Naive thymus-derived CD4-positive, alpha-beta T cell (primary cell): ENCODE measurements at regions of chr5 and their contacts with region 1.

Region 1: GRCh38 chr5:87347272-87347671 is 65.5 kb downstream of the CCNH start:
- DNase-seq: no peak
- ATAC-seq: no peak
- H3K4me3 ChIP-seq: no peak overlapping the region
- H3K4me3 Mint-ChIP-seq: no peak overlapping the region
- H3K27ac ChIP-seq: no peak overlapping the region
- H3K27ac Mint-ChIP-seq: no peak overlapping the region
- H3K4me1 ChIP-seq: no peaks in the 10 kb centered on the region
- H3K4me1 Mint-ChIP-seq: peaks cover 3 to 30% (median 18%) of the 10 kb centered on the region in 7 donors
- H3K27me3 ChIP-seq: no peaks in the 10 kb centered on the region
- H3K27me3 Mint-ChIP-seq: no peaks in the 10 kb centered on the region

Region 2: GRCh38 chr5:87361031-87361443 is 13.8 kb after region 1 on chr5:
- CTCF ChIA-PET with region 1: no interaction called
- POLR2A ChIA-PET with region 1: no interaction called
- intact Hi-C with region 1: loop called in 1 of 2 experiments (anchors 2 kb)
- DNase-seq: no peak
- ATAC-seq: no peak
- H3K4me3 ChIP-seq: no peak overlapping the region
- H3K4me3 Mint-ChIP-seq: no peak overlapping the region
- H3K27ac ChIP-seq: no peak overlapping the region
- H3K27ac Mint-ChIP-seq: no peak overlapping the region
- H3K4me1 ChIP-seq: peaks cover 0 to 7% of the 10 kb centered on the region in 2 donors
- H3K4me1 Mint-ChIP-seq: peaks cover 12 to 51% (median 36%) of the 10 kb centered on the region in 7 donors
- H3K27me3 ChIP-seq: no peaks in the 10 kb centered on the region
- H3K27me3 Mint-ChIP-seq: no peaks in the 10 kb centered on the region

Region 3: DNA sequence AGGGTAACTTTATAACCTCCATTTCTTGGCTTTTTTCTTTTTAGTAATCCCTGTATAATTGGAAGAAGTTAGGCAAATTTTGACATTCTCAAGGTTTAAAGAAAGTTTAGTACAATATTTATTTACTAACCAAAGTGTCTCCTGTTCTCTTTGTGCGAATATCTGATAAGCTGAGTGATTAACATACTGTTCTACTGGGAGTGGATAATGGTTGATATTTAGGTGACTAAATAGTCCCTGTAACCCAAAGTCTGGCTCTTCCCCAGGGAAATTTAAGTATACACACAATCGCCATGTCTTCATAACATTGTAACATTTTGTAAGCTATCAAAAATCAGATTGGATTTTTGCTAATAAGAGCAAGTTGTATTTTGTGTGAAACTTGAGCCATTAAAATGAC is 25.4 kb after region 1 on chr5:
- CTCF ChIA-PET with region 1: no interaction called
- POLR2A ChIA-PET with region 1: no interaction called
- intact Hi-C with region 1: no loop called
- DNase-seq: no peak
- ATAC-seq: no peak
- H3K4me3 ChIP-seq: no peak overlapping the region
- H3K4me3 Mint-ChIP-seq: no peak overlapping the region
- H3K27ac ChIP-seq: no peak overlapping the region
- H3K27ac Mint-ChIP-seq: peak overlapping the region in 3 of 9 donors; percentile 39 to 66 (median 53)
- H3K4me1 ChIP-seq: no peaks in the 10 kb centered on the region
- H3K4me1 Mint-ChIP-seq: peaks cover 2 to 26% (median 7%) of the 10 kb centered on the region in 7 donors
- H3K27me3 ChIP-seq: no peaks in the 10 kb centered on the region
- H3K27me3 Mint-ChIP-seq: no peaks in the 10 kb centered on the region

Region 4: DNA sequence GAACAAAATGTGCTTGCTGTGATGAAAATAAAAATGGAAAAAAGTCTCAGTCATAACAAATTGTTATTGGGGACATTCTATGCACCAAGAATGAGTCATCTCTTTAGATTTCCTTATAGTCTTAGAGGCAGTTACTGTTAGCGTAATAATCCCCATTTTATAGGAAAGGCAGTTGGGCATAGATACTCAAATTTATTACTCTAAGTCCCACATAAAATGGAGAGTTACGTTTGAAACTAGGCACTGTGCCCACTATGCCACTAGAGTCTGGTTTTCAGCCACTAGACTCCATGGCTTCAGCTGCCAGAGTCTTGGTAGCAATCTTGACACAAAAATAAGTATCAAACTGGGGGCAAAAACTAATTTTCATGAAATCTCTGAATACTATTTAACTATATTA is 1853.6 kb after region 1 on chr5:
- CTCF ChIA-PET with region 1: no interaction called
- POLR2A ChIA-PET with region 1: no interaction called
- intact Hi-C with region 1: no loop called
- DNase-seq: no peak
- ATAC-seq: no peak
- H3K4me3 ChIP-seq: no peak overlapping the region
- H3K4me3 Mint-ChIP-seq: no peak overlapping the region
- H3K27ac ChIP-seq: no peak overlapping the region
- H3K27ac Mint-ChIP-seq: no peak overlapping the region
- H3K4me1 ChIP-seq: no peaks in the 10 kb centered on the region
- H3K4me1 Mint-ChIP-seq: no peaks in the 10 kb centered on the region
- H3K27me3 ChIP-seq: no peaks in the 10 kb centered on the region
- H3K27me3 Mint-ChIP-seq: peaks cover 0 to 6% (median 0%) of the 10 kb centered on the region in 5 donors